ENCODE measurements at regions of chr17 and their contacts with region 1.

Region 1: GRCh38 chr17:1331708-1332107 is 52.2 kb downstream of the TRARG1 start:
- DNase-seq: no peak
- ATAC-seq: peak; percentile 37
- H3K4me3 Mint-ChIP-seq: no peak overlapping the region
- H3K27ac Mint-ChIP-seq: no peak overlapping the region
- H3K4me1 Mint-ChIP-seq: peaks cover 6% of the 10 kb centered on the region
- H3K27me3 Mint-ChIP-seq: peaks cover 2% of the 10 kb centered on the region
- CTCF ChIP-seq: no peak

Region 2: GRCh38 chr17:978103-979093 is 353.3 kb before region 1 on chr17:
- CTCF ChIA-PET with region 1: no interaction called
- POLR2A ChIA-PET with region 1: no interaction called
- intact Hi-C with region 1: no loop called
- DNase-seq: no peak
- ATAC-seq: no peak
- H3K4me3 Mint-ChIP-seq: peak overlapping the region; percentile 47
- H3K27ac Mint-ChIP-seq: no peak overlapping the region
- H3K4me1 Mint-ChIP-seq: peaks cover 11% of the 10 kb centered on the region
- H3K27me3 Mint-ChIP-seq: peaks cover 32% of the 10 kb centered on the region
- CTCF ChIP-seq: no peak

Region 3: GRCh38 chr17:1260086-1260769 is 71.5 kb before region 1 on chr17:
- CTCF ChIA-PET with region 1: interaction called, 54 read pairs
- POLR2A ChIA-PET with region 1: no interaction called
- intact Hi-C with region 1: no loop called
- DNase-seq: no peak
- ATAC-seq: no peak
- H3K4me3 Mint-ChIP-seq: no peak overlapping the region
- H3K27ac Mint-ChIP-seq: no peak overlapping the region
- H3K4me1 Mint-ChIP-seq: peaks cover 21% of the 10 kb centered on the region
- H3K27me3 Mint-ChIP-seq: peaks cover 20% of the 10 kb centered on the region
- CTCF ChIP-seq: no peak

Region 4: GRCh38 chr17:1267471-1267947 is 64.2 kb before region 1 on chr17:
- CTCF ChIA-PET with region 1: interaction called, 20 read pairs
- POLR2A ChIA-PET with region 1: no interaction called
- intact Hi-C with region 1: no loop called
- DNase-seq: no peak
- ATAC-seq: no peak
- H3K4me3 Mint-ChIP-seq: peak overlapping the region; percentile 71
- H3K27ac Mint-ChIP-seq: no peak overlapping the region
- H3K4me1 Mint-ChIP-seq: peaks cover 8% of the 10 kb centered on the region
- H3K27me3 Mint-ChIP-seq: peaks cover 20% of the 10 kb centered on the region
- CTCF ChIP-seq: no peak

Region 5: DNA sequence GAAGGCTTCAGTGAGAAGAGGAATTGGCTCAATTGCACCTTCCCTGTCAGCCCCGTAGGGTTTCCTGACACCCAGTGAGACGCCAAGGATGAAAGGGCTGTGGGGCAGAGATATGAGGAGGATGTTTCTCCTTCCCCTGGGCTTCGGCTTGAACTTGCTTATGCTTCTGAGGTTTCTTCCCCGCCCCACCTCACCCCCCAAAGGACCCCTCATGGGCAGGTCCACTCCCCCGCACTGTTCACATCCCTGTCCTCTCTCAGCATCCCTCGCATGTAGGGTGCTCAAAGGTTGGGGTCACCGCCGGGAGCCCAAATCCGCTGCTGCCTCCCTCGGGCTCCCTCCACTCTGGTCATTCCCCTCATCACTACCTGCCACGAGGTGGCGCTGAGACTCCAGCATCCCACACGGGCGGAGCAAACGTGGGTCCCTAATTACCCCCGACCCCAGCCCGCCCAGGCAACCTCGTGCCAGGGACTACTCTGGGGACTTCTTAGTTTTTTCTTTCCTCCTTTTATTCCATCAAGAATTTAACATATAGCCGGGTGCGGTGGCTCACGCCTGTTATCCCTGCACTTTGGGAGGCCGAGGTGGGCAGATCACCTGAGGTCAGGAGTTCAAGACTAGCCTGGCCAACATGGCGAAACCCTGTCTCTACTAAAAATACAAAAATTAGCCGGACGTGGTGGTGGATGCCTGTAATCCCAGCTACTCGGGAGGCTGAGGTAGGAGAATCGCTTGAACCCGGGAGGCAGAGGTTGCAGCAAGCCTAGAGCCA is 55.6 kb before region 1 on chr17:
- CTCF ChIA-PET with region 1: interaction called, 15 read pairs
- POLR2A ChIA-PET with region 1: no interaction called
- intact Hi-C with region 1: loop called (anchors 2 kb)
- DNase-seq: peak; percentile 83
- ATAC-seq: peak; percentile 94
- H3K4me3 Mint-ChIP-seq: no peak overlapping the region
- H3K27ac Mint-ChIP-seq: no peak overlapping the region
- H3K4me1 Mint-ChIP-seq: peaks cover 3% of the 10 kb centered on the region
- H3K27me3 Mint-ChIP-seq: peaks cover 27% of the 10 kb centered on the region
- CTCF ChIP-seq: peak; percentile 93

Region 6: DNA sequence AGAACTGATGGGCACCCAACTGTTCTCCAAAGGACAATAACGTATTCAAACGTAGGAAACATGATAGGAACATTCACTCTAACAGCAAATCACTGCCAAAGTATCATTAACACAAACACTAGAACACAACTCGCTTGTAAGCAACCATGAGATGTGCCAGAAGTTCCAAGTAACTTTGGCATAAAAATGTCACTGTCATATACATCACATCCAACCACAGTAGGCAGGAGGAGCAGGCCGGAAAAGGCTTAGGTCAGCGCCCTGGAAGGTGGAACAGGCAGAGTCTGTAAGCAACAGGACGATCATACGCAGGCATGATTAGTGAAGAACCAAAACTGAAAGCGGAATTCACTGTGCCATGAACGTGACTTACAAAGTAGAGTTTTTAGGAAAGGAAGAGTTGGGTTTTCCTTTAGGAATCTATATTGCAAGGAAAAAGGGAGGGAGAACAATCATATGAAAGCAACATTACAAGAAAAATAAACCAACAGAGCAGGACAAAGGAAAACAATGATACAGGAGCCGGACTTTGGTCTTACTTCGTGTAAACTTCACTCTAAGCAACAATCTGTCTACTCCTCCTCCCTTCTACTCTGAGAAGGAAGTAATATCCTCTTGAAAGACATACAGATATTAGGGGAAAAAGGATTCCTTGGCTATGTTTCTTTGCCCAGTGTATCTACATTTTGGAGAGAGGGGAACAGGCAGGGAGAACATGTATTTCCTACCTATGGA is 16.0 kb after region 1 on chr17:
- CTCF ChIA-PET with region 1: interaction called, 21 read pairs
- POLR2A ChIA-PET with region 1: no interaction called
- intact Hi-C with region 1: no loop called
- DNase-seq: no peak
- ATAC-seq: no peak
- H3K4me3 Mint-ChIP-seq: no peak overlapping the region
- H3K27ac Mint-ChIP-seq: peak overlapping the region; percentile 81
- H3K4me1 Mint-ChIP-seq: peaks cover 41% of the 10 kb centered on the region
- H3K27me3 Mint-ChIP-seq: no peaks in the 10 kb centered on the region
- CTCF ChIP-seq: no peak

Measured in activated CD8-positive, alpha-beta T cell treated with anti-CD3 and anti-CD28 coated beads for 36 hours (primary cell).